GM12878 (cell line): ENCODE measurements at regions of chr10 and their contacts with region 1.

Region 1: DNA sequence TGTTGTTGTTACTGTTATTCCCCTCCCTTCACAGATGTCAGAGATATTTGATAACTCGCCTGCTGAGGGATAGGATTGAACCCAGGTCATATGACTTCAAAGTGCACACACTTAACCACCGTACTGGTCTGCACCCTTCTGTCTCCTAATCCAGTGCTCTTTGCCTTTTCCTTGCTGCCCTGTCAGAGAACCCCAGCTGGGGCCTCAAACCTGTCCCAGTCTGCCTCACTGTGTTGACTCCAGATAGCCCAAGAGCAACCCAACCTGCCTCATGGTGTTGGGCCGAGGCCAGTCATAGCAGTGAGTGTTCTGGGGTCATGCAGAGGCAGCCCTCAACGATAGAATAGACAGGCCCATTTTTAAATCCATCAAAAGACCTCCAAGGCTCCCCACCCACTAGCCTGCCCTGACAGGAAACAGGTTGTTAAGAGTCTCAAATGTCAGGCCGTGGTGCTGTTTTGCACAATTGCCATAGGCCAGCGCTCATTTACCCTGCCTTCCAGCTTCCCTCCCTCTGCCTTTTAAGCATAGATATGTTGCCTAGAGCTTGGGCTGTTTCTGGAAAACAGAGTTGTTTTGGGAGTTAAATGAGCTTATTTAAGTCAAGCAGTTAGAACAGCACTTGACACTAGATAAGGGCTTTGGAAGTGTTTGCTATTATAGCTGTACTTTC is 37.0 kb upstream of the PDCD4 start:
- DNase-seq: no peak
- ATAC-seq: no peak
- H3K4me3 ChIP-seq: no peak overlapping the region
- H3K27ac ChIP-seq: no peak overlapping the region
- H3K4me1 ChIP-seq: no peaks in the 10 kb centered on the region
- H3K27me3 ChIP-seq: no peaks in the 10 kb centered on the region
- CTCF ChIP-seq: no peak
- EP300 ChIP-seq: no peak
- POLR2A ChIP-seq: no peak
- RAD21 ChIP-seq: no peak

Region 2: DNA sequence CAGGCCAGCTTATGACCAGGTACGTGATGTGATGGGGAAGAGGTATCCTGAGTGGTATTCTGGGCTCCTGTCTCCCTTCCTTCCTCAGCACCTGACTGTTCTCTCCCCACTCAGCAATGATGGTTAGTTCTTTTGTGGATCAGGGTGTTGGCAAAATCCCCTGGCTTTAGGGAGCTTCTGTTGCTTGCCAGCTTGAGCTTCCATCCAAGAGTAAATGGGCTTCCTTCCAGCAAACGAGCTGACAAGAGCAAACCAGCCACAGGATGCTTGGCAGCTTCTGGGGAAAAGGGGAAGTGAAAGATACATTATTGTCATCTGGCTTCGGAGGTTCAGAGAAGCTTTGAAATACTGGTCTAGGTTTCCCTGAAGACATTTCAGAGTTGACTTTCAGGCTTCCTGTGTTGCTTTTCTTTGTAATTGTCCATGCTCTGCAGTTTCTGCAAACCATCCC is 331.9 kb before region 1 on chr10:
- CTCF ChIA-PET with region 1: no interaction called
- POLR2A ChIA-PET with region 1: no interaction called
- RAD21 ChIA-PET with region 1: no interaction called
- SMC1A ChIA-PET with region 1: no interaction called
- in situ Hi-C with region 1: no loop called
- intact Hi-C with region 1: no loop called
- DNase-seq: peak; percentile 93
- ATAC-seq: peak; percentile 35
- H3K4me3 ChIP-seq: peak overlapping the region; percentile 95
- H3K27ac ChIP-seq: peak overlapping the region; percentile 91
- H3K4me1 ChIP-seq: peaks cover 49% of the 10 kb centered on the region
- H3K27me3 ChIP-seq: no peaks in the 10 kb centered on the region
- CTCF ChIP-seq: no peak
- EP300 ChIP-seq: peak; percentile 82 to 93; a peak in 3 of 4 replicates
- POLR2A ChIP-seq: peak; percentile 49
- RAD21 ChIP-seq: peak; percentile 21; the same call in 1 of the 2 replicates

Region 3: DNA sequence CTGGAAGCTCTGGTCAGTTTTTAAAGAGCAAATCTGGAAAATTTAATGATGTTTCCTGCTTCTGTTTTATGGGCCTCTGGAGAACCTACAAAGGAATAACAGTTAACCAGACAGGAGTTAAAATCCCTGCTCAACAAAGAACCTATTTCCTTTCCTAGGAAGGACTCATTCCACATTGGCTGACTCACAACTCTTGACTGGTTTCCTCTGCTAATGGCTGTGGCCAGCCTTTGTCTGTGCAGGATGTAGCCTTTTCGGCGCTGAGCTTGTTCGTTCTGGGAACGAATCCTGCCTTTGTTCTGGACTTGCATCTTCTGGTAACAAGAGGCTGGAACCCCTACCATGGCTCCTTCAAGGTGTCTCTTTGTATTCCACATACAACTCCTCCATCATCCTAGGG is 75.9 kb before region 1 on chr10:
- CTCF ChIA-PET with region 1: no interaction called
- POLR2A ChIA-PET with region 1: no interaction called
- RAD21 ChIA-PET with region 1: no interaction called
- SMC1A ChIA-PET with region 1: no interaction called
- in situ Hi-C with region 1: no loop called
- intact Hi-C with region 1: no loop called
- DNase-seq: no peak
- ATAC-seq: no peak
- H3K4me3 ChIP-seq: no peak overlapping the region
- H3K27ac ChIP-seq: no peak overlapping the region
- H3K4me1 ChIP-seq: peaks cover 7% of the 10 kb centered on the region
- H3K27me3 ChIP-seq: no peaks in the 10 kb centered on the region
- CTCF ChIP-seq: no peak
- EP300 ChIP-seq: no peak
- POLR2A ChIP-seq: no peak
- RAD21 ChIP-seq: no peak

Region 4: GRCh38 chr10:110811791-110812574 is 22.8 kb before region 1 on chr10:
- CTCF ChIA-PET with region 1: no interaction called
- POLR2A ChIA-PET with region 1: interaction called, 3 read pairs
- RAD21 ChIA-PET with region 1: interaction called, 12 read pairs
- SMC1A ChIA-PET with region 1: interaction called, 21 read pairs
- in situ Hi-C with region 1: no loop called
- intact Hi-C with region 1: no loop called
- DNase-seq: no peak
- ATAC-seq: no peak
- H3K4me3 ChIP-seq: no peak overlapping the region
- H3K27ac ChIP-seq: no peak overlapping the region
- H3K4me1 ChIP-seq: peaks cover 19% of the 10 kb centered on the region
- H3K27me3 ChIP-seq: no peaks in the 10 kb centered on the region
- CTCF ChIP-seq: no peak
- EP300 ChIP-seq: no peak
- POLR2A ChIP-seq: no peak
- RAD21 ChIP-seq: no peak

Region 5: GRCh38 chr10:110820321-110820814 is 14.4 kb before region 1 on chr10:
- CTCF ChIA-PET with region 1: interaction called, 7 read pairs
- POLR2A ChIA-PET with region 1: interaction called, 5 read pairs
- RAD21 ChIA-PET with region 1: interaction called, 3 read pairs
- SMC1A ChIA-PET with region 1: interaction called, 21 read pairs
- in situ Hi-C with region 1: no loop called
- intact Hi-C with region 1: no loop called
- DNase-seq: no peak
- ATAC-seq: no peak
- H3K4me3 ChIP-seq: no peak overlapping the region
- H3K27ac ChIP-seq: no peak overlapping the region
- H3K4me1 ChIP-seq: peaks cover 27% of the 10 kb centered on the region
- H3K27me3 ChIP-seq: no peaks in the 10 kb centered on the region
- CTCF ChIP-seq: no peak
- EP300 ChIP-seq: no peak
- POLR2A ChIP-seq: no peak
- RAD21 ChIP-seq: no peak

Region 6: DNA sequence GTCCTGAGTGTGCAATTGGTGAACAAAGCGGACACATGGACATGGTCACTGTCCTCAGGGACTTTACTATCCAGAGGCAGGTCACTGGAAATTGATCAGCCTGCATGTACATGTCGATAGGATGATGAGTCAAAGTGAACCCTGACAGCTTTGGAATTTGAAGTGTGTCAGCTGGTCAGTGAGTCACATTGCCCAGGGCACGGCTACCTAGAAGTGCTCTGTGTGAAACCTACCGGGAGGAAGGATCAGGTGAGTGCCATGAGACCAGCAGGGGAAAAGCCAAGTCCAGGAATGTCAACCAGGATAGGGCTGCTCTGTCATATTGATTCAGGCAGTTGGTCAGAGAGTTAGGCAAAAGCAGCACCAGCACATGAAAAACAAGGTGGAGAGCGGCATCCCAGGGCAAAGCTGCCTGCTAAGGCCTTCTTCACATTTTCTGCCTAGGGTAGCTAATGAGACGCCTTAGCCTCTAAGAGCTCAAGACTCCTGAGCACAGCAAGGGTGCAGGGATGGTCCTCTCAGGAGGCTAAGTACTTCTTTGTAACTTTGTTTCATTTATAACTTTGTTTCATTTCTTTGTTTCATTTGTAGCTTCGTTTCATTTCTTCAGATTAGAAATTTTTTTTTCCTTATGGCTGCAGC is 17.6 kb after region 1 on chr10:
- CTCF ChIA-PET with region 1: interaction called, 3 read pairs
- POLR2A ChIA-PET with region 1: interaction called, 12 read pairs
- RAD21 ChIA-PET with region 1: no interaction called
- SMC1A ChIA-PET with region 1: interaction called, 3 read pairs
- in situ Hi-C with region 1: no loop called
- intact Hi-C with region 1: no loop called
- DNase-seq: no peak
- ATAC-seq: peak; percentile 28
- H3K4me3 ChIP-seq: no peak overlapping the region
- H3K27ac ChIP-seq: peak overlapping the region; percentile 39
- H3K4me1 ChIP-seq: peaks cover 53% of the 10 kb centered on the region
- H3K27me3 ChIP-seq: no peaks in the 10 kb centered on the region
- CTCF ChIP-seq: no peak
- EP300 ChIP-seq: no peak
- POLR2A ChIP-seq: no peak
- RAD21 ChIP-seq: no peak